HAP-1 (cell line): ENCODE measurements at regions of chrX and their contacts with region 1.

Region 1: GRCh38 chrX:129606918-129607317 is 47.8 kb downstream of the APLN start:
- DNase-seq: peak; percentile 59 to 82
- H3K4me3 ChIP-seq: no peak overlapping the region
- H3K4me1 ChIP-seq: peaks cover 13% of the 10 kb centered on the region
- H3K27me3 ChIP-seq: no peaks in the 10 kb centered on the region

Region 2: GRCh38 chrX:129726307-129727111 is 119.6 kb after region 1 on chrX:
- in situ Hi-C with region 1: loop called (anchors 5 kb)
- DNase-seq: peak; percentile 32 to 80
- H3K4me3 ChIP-seq: no peak overlapping the region
- H3K4me1 ChIP-seq: no peaks in the 10 kb centered on the region
- H3K27me3 ChIP-seq: no peaks in the 10 kb centered on the region; the same call in none of the 2 replicates

Region 3: DNA sequence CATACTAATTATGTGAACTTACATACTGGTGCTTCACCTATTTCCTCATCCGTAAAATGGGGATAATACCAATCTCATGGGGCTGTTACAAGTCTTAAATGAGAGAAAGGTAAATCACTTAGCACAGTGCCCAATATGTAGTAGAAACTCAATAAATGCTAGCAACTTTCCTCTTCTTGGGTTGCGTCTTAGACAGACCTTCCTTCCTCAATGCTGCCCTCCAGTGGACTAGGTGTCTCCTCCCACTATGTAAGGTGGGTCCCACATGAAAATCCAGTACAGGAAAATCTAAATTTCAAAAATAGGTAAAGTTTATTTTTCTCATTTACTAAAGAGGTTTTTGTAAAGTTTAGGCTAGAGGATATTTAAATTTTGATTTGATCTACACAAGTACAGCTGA is 216.2 kb after region 1 on chrX:
- in situ Hi-C with region 1: loop called (anchors 10 kb)
- DNase-seq: peak; percentile 26 to 70
- H3K4me3 ChIP-seq: no peak overlapping the region
- H3K4me1 ChIP-seq: no peaks in the 10 kb centered on the region
- H3K27me3 ChIP-seq: no peaks in the 10 kb centered on the region

Region 4: DNA sequence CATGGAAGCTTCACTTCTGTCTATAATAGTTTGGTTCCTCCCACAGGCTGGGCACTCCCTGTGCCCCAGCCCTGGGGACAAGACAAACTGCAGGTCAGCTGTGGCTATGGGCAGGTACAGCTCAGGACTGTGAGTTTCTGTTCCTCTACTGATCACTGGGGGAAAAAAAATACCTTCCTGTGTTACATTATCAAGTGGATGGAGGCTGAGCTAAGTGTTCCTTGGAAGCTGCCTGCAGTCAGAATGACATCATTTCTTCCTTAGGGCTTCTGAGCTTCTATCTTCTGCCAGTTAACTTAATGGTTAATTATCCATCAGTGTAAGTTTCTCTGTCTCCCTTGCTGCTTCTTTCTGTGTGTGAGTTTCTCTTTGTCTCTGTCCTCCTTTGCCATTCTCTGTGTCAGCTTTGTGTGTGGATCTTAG is 569.4 kb after region 1 on chrX:
- in situ Hi-C with region 1: loop called (anchors 25 kb)
- DNase-seq: no peak
- H3K4me3 ChIP-seq: no peak overlapping the region
- H3K4me1 ChIP-seq: peaks cover 11% of the 10 kb centered on the region
- H3K27me3 ChIP-seq: no peaks in the 10 kb centered on the region